K562 (cell line): ENCODE measurements at regions of chr6 and their contacts with region 1.

Region 1: GRCh38 chr6:35757456-35758123 is 18.8 kb upstream of the CLPSL2 start:
- DNase-seq: peak; percentile 57 to 81 (median 67)
- ATAC-seq: peak; percentile 96
- H3K4me3 ChIP-seq: no peak overlapping the region
- H3K27ac ChIP-seq: no peak overlapping the region
- H3K4me1 ChIP-seq: no peaks in the 10 kb centered on the region
- H3K27me3 ChIP-seq: peaks cover 41 to 79% of the 10 kb centered on the region in 2 experiments
- CTCF ChIP-seq: peak; percentile 79 to 83 (median 83)
- EP300 ChIP-seq: no peak
- POLR2A ChIP-seq: no peak
- RAD21 ChIP-seq: peak; percentile 51 to 79

Region 2: GRCh38 chr6:35955976-35956375 is 198.4 kb after region 1 on chr6:
- CTCF ChIA-PET with region 1: no interaction called
- POLR2A ChIA-PET with region 1: no interaction called
- in situ Hi-C with region 1: no loop called
- intact Hi-C with region 1: loop called (anchors 5 kb)
- DNase-seq: peak in 1 of 4 experiments; percentile 27
- ATAC-seq: peak; percentile 74
- H3K4me3 ChIP-seq: no peak overlapping the region
- H3K27ac ChIP-seq: no peak overlapping the region
- H3K4me1 ChIP-seq: no peaks in the 10 kb centered on the region
- H3K27me3 ChIP-seq: peaks cover 39 to 40% of the 10 kb centered on the region in 2 experiments
- CTCF ChIP-seq: peak; percentile 65 to 71 (median 69)
- EP300 ChIP-seq: no peak
- POLR2A ChIP-seq: no peak
- RAD21 ChIP-seq: peak; percentile 27 to 60; a peak in 3 of 4 replicates